Activated naive CD4-positive, alpha-beta T cell treated with anti-CD3 and anti-CD28 coated beads for 36 hours (primary cell): ENCODE measurements at regions of chr5 and their contacts with region 1.

Region 1: DNA sequence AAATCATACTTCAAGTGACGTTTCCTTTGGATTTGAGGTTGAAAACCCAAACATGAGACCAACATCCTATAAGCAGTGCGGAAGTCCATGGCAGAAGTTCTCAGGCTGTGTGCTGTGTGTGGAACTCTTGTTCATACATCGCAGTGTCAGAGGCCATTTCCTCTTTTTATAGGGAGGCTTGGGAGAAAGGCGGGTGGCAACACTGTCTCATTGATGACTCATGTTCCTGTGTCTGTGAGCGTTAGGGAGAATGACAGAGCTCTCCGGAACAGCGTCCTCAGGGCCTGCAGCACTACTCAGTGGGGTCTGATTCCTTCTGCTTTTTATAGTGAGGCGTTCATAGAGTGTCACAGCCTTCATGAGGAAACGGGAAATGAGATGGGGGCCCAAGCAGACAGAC is 98.8 kb upstream of the BASP1 start:
- DNase-seq: peak; percentile 32
- H3K4me3 Mint-ChIP-seq: peak overlapping the region; percentile 30
- H3K27ac Mint-ChIP-seq: no peak overlapping the region
- H3K4me1 Mint-ChIP-seq: peaks cover 6% of the 10 kb centered on the region
- H3K27me3 Mint-ChIP-seq: peaks cover 12% of the 10 kb centered on the region

Region 2: GRCh38 chr5:17180957-17181723 is 62.5 kb after region 1 on chr5:
- CTCF ChIA-PET with region 1: no interaction called
- intact Hi-C with region 1: loop called (anchors 5 kb)
- DNase-seq: peak; percentile 49
- H3K4me3 Mint-ChIP-seq: no peak overlapping the region
- H3K27ac Mint-ChIP-seq: peak overlapping the region; percentile 14
- H3K4me1 Mint-ChIP-seq: peaks cover 8% of the 10 kb centered on the region
- H3K27me3 Mint-ChIP-seq: peaks cover 2% of the 10 kb centered on the region